ENCODE measurements at regions of chr4 and their contacts with region 1.

Region 1: GRCh38 chr4:2008875-2009703 is at the start of gene NELFA:
- DNase-seq: peak; percentile 94 to 97 (median 96)
- H3K4me3 ChIP-seq: peak within 1 kb of the TSS; percentile 61 to 99 (median 95)
- H3K27ac ChIP-seq: peak within 1 kb of the TSS; percentile 92 to 100 (median 99)
- H3K27me3 ChIP-seq: no peaks in the 10 kb centered on the region
- CTCF ChIP-seq: peak in 53 of 56 donors; percentile 20 to 89 (median 63)
- total RNA-seq, gene NELFA: 31.6 to 76.1 (median 48.7) TPM

Region 2: GRCh38 chr4:1856042-1856788 is 152.9 kb before region 1 on chr4 and contains the start of gene LETM1:
- intact Hi-C with region 1: loop called in 1 of 2 experiments (anchors 10 kb)
- DNase-seq: peak; percentile 91 to 98 (median 96)
- H3K4me3 ChIP-seq: peak within 1 kb of the TSS; percentile 53 to 99 (median 93)
- H3K27ac ChIP-seq: peak within 1 kb of the TSS; percentile 14 to 96 (median 83)
- H3K27me3 ChIP-seq: no peaks in the 10 kb centered on the region
- CTCF ChIP-seq: peak in 41 of 56 donors; percentile 6 to 62 (median 33)
- total RNA-seq, gene LETM1: 36.9 to 61.2 (median 48.6) TPM

Region 3: DNA sequence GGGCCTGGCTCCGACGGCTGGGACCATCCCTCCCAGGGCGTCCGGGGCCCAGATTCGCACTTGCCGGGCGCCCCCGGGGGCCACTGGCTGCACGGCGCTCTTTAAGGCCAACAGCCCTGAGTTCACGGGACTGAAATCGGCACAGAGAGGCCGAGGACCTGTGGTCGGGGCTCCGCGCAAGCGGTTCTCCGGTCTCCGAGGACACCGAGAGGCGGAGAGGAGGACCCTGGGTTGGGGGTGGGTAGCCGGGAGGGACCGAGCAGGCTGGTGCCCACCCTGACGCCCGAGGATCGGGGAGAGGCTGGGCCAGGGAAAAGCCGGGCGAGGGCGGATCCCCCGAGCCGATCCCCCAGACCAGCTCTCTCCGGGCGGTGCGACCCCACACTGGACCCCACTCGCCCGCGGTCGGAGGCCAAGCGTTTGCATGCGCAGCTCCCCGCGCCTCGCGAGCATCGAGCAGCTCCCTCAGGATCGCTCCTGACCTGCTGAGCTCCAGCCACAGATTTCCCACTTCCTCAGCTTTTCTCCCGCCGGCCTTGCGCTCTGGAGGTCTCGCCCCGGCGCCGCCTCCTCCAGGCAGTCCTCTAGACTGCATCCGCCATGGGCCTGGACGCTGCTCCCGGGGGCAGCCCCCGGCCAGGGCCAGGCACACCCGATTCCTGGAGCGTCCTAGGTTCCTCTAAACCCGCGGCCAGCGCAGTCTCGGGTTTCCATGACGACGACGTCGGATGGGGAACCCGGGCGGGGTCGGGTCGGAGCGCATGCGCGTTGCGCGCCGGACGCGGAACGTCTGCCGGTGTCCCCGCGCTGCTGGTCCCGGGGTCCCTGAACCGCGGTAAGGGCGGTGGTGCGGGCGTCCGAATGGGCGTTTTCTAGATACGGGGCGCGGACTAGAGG is 32.4 kb after region 1 on chr4:
- intact Hi-C with region 1: loop called (anchors 5 kb)
- DNase-seq: peak; percentile 78 to 95 (median 86)
- H3K4me3 ChIP-seq: peak overlapping the region; percentile 54 to 97 (median 81)
- H3K27ac ChIP-seq: peak overlapping the region in 55 of 59 donors; percentile 15 to 91 (median 81)
- H3K27me3 ChIP-seq: peaks cover 0 to 6% (median 0%) of the 10 kb centered on the region in 45 donors
- CTCF ChIP-seq: peak in 2 of 56 donors; percentile 7 to 13

Region 4: DNA sequence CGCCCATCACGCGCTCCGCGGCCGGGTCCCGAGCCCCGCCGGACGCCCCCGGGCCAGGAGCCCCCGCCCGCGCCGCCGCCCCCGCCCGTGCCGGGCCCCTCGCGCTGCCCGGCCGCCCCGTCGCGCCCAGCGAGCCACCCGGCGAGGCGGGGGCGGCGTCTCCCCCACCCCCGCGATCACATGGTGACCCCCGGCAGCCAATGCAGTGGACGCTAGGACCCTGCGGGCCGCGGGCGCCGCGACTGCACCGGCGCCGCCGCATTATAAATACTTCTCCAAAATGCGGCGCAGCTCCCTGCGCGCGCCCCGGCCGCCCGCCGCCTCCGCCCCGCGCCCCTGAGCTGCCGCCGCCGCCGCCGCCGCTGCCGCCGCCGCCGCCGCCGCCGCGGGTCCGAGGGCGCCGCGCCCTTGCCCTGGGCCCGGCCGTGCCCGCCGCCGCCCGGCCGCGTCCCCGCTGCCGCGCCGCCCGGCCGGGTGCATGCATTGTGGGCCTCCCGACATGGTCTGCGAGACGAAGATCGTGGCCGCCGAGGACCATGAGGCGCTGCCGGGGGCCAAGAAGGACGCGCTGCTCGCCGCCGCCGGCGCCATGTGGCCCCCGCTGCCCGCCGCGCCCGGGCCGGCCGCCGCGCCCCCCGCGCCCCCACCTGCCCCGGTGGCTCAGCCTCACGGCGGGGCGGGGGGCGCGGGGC is 50.1 kb after region 1 on chr4 and contains the start of gene NAT8L:
- intact Hi-C with region 1: loop called (anchors 1 to 5 kb)
- DNase-seq: peak; percentile 68 to 88 (median 84)
- H3K4me3 ChIP-seq: peak within 1 kb of the TSS; percentile 53 to 83 (median 72)
- H3K27ac ChIP-seq: peak within 1 kb of the TSS in 58 of 59 donors; percentile 55 to 95 (median 89)
- H3K27me3 ChIP-seq: no peaks in the 10 kb centered on the region
- CTCF ChIP-seq: no peak
- total RNA-seq, gene NAT8L: 89.4 to 267 (median 170) TPM

Region 5: GRCh38 chr4:2241410-2242353 is 232.6 kb after region 1 on chr4 and contains the starts of genes HAUS3 and POLN:
- intact Hi-C with region 1: loop called in 1 of 2 experiments (anchors 10 kb)
- DNase-seq: peak; percentile 93 to 99 (median 96)
- H3K4me3 ChIP-seq: peak within 1 kb of the TSS; percentile 64 to 100 (median 96)
- H3K27ac ChIP-seq: peak within 1 kb of the TSS in 53 of 59 donors; percentile 2 to 89 (median 71)
- H3K27me3 ChIP-seq: no peaks in the 10 kb centered on the region
- CTCF ChIP-seq: peak in 22 of 56 donors; percentile 11 to 57 (median 40)
- total RNA-seq, gene HAUS3: 13.0 to 29.2 (median 19.3) TPM
- total RNA-seq, gene POLN: 9.4 to 50.0 (median 23.7) TPM